GM12878 (cell line): ENCODE measurements at regions of chr3 and their contacts with region 1.

Region 1: GRCh38 chr3:150286390-150287147 is 121.5 kb upstream of the TSC22D2 start:
- DNase-seq: peak; percentile 15
- ATAC-seq: peak; percentile 99
- H3K4me3 ChIP-seq: no peak overlapping the region
- H3K27ac ChIP-seq: no peak overlapping the region
- H3K4me1 ChIP-seq: no peaks in the 10 kb centered on the region
- H3K27me3 ChIP-seq: no peaks in the 10 kb centered on the region
- CTCF ChIP-seq: peak; percentile 52 to 60 (median 57); a peak in 5 of 6 replicates
- EP300 ChIP-seq: no peak
- POLR2A ChIP-seq: no peak
- RAD21 ChIP-seq: peak; percentile 75

Region 2: GRCh38 chr3:150227839-150228238 is 58.7 kb before region 1 on chr3:
- CTCF ChIA-PET with region 1: interaction called, 10 read pairs
- POLR2A ChIA-PET with region 1: no interaction called
- RAD21 ChIA-PET with region 1: interaction called, 3 read pairs
- SMC1A ChIA-PET with region 1: interaction called, 4 read pairs
- in situ Hi-C with region 1: no loop called
- intact Hi-C with region 1: no loop called
- DNase-seq: no peak
- ATAC-seq: peak; percentile 94
- H3K4me3 ChIP-seq: no peak overlapping the region
- H3K27ac ChIP-seq: no peak overlapping the region
- H3K4me1 ChIP-seq: no peaks in the 10 kb centered on the region
- H3K27me3 ChIP-seq: 0 out of 4 replicates have a peak, but pooled peaks cover 0 to 3% of the 10 kb centered on the region in 2 experiments
- CTCF ChIP-seq: peak; percentile 71 to 81 (median 80)
- EP300 ChIP-seq: no peak
- POLR2A ChIP-seq: no peak
- RAD21 ChIP-seq: peak; percentile 87

Region 3: GRCh38 chr3:150299201-150299600 is 12.6 kb after region 1 on chr3:
- CTCF ChIA-PET with region 1: interaction called, 15 read pairs
- POLR2A ChIA-PET with region 1: no interaction called
- RAD21 ChIA-PET with region 1: interaction called, 9 read pairs
- SMC1A ChIA-PET with region 1: interaction called, 10 read pairs
- in situ Hi-C with region 1: no loop called
- intact Hi-C with region 1: no loop called
- DNase-seq: no peak
- ATAC-seq: no peak
- H3K4me3 ChIP-seq: no peak overlapping the region
- H3K27ac ChIP-seq: no peak overlapping the region
- H3K4me1 ChIP-seq: no peaks in the 10 kb centered on the region
- H3K27me3 ChIP-seq: no peaks in the 10 kb centered on the region; a peak in 1 of 4 replicates
- CTCF ChIP-seq: no peak
- EP300 ChIP-seq: no peak
- POLR2A ChIP-seq: no peak
- RAD21 ChIP-seq: no peak